Brain microvascular endothelial cell (primary cell): ENCODE measurements at regions of chr1 and their contacts with region 1.

Region 1: GRCh38 chr1:212077051-212077450 is 41.5 kb downstream of the DTL start:
- DNase-seq: no peak
- H3K4me3 ChIP-seq: no peak overlapping the region
- H3K27ac ChIP-seq: no peak overlapping the region
- H3K27me3 ChIP-seq: no peaks in the 10 kb centered on the region
- CTCF ChIP-seq: no peak

Region 2: DNA sequence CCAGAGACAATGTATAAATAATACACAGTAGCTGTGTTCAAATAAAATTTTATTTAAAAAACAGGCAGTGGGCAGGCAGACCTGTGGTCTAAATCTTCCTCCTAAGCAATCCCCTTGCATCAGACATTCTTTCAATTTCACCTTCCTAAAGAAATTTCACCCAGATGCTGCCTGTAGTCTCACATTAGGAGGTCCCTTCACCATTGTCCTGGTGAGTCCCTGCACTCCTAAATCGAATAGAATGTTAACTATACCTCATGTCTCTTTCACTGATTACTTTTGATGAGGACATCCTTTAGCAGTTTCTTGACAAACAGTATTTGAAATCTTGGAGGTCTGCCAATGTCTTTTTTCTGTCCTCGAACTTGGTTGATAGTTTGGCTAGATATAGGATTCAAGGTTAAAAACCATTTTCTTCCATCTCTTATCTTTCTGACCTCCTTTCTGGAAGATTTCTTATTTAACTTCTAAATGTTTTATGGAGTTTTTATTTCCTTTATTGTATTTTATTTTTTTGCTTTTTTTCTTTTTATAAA is 324.0 kb before region 1 on chr1:
- in situ Hi-C with region 1: no loop called
- DNase-seq: no peak
- H3K4me3 ChIP-seq: no peak overlapping the region
- H3K27ac ChIP-seq: no peak overlapping the region
- H3K27me3 ChIP-seq: no peaks in the 10 kb centered on the region
- CTCF ChIP-seq: no peak

Region 3: GRCh38 chr1:211825980-211826379 is 251.1 kb before region 1 on chr1:
- in situ Hi-C with region 1: no loop called
- DNase-seq: peak; percentile 41
- H3K4me3 ChIP-seq: no peak overlapping the region
- H3K27ac ChIP-seq: no peak overlapping the region
- H3K27me3 ChIP-seq: no peaks in the 10 kb centered on the region
- CTCF ChIP-seq: no peak

Region 4: DNA sequence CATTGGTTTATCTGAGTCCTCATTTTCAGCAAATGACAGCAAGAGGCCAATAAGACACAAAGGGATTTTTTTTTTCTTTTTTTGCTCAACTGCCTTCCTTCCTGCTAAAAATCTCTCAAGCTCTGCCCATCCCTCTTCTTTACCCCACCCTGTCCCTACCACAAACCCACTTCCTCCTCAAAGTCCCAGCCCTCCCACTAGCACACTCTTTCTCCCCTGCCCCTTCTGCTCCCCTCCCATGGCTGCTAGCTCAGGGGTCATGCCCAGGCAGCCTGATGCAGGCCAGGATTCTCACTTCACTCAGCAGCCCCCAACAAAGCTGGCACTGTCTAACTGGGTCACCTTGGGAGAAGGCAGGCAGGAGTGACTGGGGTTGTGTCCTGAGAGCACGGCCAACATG is 179.3 kb after region 1 on chr1:
- in situ Hi-C with region 1: loop called (anchors 25 kb)
- DNase-seq: no peak
- H3K4me3 ChIP-seq: no peak overlapping the region
- H3K27ac ChIP-seq: no peak overlapping the region
- H3K27me3 ChIP-seq: no peaks in the 10 kb centered on the region
- CTCF ChIP-seq: no peak